Activated T-helper 1 cell treated with anti-CD3 and anti-CD28 coated beads, Interleukin-12 subunit alpha, Interleukin-12 subunit beta, Interleukin-2, Interleukin-4 antibody, amounts not matched to agents 30 ng/mL and 10 ng/mL and 1 ng/mL, durations not matched to agents 14 hours and 24 hours and 36 hours (primary cell): ENCODE measurements at regions of chr7 and their contacts with region 1.

Region 1: GRCh38 chr7:92621026-92621540 is 30.9 kb upstream of the FAM133B start:
- DNase-seq: peak; percentile 74
- H3K4me3 Mint-ChIP-seq: peak overlapping the region; percentile 75
- H3K27ac Mint-ChIP-seq: peak overlapping the region; percentile 89
- H3K4me1 Mint-ChIP-seq: peaks cover 58% of the 10 kb centered on the region
- H3K27me3 Mint-ChIP-seq: no peaks in the 10 kb centered on the region

Region 2: GRCh38 chr7:92633211-92633906 is 12.3 kb after region 1 on chr7:
- intact Hi-C with region 1: loop called (anchors 1 kb)
- DNase-seq: peak; percentile 48
- H3K4me3 Mint-ChIP-seq: peak overlapping the region; percentile 64
- H3K27ac Mint-ChIP-seq: peak overlapping the region; percentile 94
- H3K4me1 Mint-ChIP-seq: peaks cover 80% of the 10 kb centered on the region
- H3K27me3 Mint-ChIP-seq: no peaks in the 10 kb centered on the region

Region 3: DNA sequence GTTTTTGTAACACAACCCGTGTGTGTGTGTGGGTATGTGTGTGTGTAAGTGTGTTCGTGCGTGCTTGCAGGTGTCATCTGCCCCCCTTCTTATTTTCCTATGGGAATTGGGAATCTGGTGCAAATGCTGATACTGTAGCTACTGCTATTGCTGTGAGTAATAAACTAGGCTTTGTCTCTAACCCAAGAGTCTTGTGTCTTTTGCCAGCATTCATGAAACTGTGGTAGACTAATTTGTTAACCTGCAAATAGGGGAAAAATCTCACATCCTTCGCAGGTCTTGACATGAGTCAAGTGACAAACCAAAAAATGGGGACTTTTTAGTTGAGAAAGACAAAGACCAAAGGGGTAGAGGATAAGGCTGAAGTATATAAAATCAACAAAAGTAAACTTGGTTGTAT is 27.0 kb after region 1 on chr7:
- intact Hi-C with region 1: loop called (anchors 1 kb)
- DNase-seq: no peak
- H3K4me3 Mint-ChIP-seq: peak overlapping the region; percentile 57
- H3K27ac Mint-ChIP-seq: peak overlapping the region; percentile 98
- H3K4me1 Mint-ChIP-seq: peaks cover 91% of the 10 kb centered on the region
- H3K27me3 Mint-ChIP-seq: no peaks in the 10 kb centered on the region

Region 4: DNA sequence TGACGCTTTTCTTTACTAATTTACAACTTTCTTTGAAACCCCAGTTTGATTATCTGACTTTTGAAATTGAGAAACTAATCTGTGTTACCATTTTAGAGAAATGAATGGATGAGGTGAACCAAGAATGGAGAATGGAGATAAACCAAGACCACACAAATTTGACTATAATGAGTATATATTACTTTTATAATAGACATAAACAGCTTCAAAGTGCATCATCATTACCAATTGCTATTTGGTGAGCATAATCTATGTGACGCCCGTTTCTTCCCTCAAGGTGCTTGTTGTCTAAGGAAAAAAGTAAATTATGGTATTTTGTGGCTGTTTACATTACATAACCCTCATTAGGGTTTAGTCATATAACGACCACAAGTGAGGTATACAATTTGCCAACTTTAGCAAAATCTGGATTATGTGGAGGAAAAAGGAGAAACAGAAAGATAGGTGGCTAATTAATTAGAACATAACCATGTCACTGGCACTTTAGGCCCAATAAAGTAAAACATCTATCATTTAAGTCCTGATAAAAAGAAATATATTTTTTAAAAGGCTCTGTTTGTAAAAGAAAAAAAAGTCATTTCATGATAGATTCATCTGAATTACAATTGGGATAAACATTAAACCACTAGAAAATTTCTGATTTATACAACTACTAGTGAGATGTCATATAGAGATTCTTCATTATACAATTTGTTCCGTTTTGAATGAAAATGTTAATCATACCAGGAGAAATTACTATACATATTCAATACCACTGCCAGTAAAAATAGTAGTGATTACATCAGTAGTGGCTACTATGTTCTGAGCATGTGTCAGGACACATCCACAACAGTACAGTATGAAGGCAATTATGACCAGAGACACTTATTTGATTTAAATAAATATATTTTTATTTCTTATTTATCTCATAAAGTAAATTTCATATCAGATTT is 87.3 kb after region 1 on chr7:
- intact Hi-C with region 1: loop called (anchors 1 kb)
- DNase-seq: no peak
- H3K4me3 Mint-ChIP-seq: no peak overlapping the region
- H3K27ac Mint-ChIP-seq: peak overlapping the region; percentile 84
- H3K4me1 Mint-ChIP-seq: peaks cover 59% of the 10 kb centered on the region
- H3K27me3 Mint-ChIP-seq: no peaks in the 10 kb centered on the region

Region 5: DNA sequence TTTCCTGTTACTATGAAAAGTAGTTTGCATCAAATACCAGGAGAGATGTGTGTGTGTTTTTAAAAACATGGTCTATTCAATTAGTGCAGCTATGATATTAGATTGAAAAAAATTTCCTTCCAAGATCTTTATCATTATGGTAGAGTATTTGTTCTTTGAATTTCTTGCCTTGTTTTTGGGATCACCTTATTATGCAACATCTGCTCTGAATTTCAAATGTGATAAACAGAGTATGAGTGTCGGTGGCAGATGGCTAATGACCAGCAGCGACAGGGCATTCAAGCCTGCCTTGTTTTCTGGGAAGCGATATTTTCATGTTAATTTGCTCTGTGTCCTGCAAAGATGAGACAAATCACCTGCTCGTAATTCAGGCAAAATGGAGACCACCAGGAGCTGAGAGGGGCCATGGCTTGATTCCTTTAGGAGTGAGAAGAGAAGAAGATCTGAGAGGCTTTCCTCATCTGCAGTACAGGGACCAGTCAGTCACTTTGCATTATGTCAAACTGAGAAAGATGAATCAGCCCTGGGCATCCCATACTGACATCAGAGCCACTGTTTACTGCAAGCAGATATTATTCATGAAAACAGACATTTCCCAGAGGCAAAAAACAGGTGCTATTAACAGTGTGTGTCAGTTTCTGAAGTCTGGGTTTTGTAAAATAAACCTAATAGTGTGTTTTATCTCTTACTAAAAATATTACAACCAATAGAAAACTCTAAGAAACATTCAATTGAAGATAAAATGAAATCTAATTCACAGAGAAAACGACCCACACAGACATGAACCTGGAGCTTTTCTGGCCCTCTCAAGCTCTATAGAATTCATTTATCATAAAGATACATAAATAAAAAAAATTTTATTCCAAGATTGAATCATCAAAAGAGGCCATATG is 147.7 kb after region 1 on chr7:
- intact Hi-C with region 1: loop called (anchors 1 kb)
- DNase-seq: peak; percentile 20
- H3K4me3 Mint-ChIP-seq: peak overlapping the region; percentile 47
- H3K27ac Mint-ChIP-seq: peak overlapping the region; percentile 85
- H3K4me1 Mint-ChIP-seq: peaks cover 83% of the 10 kb centered on the region
- H3K27me3 Mint-ChIP-seq: no peaks in the 10 kb centered on the region

Region 6: GRCh38 chr7:92953657-92954056 is 332.6 kb after region 1 on chr7:
- intact Hi-C with region 1: loop called (anchors 2 kb)
- DNase-seq: no peak
- H3K4me3 Mint-ChIP-seq: no peak overlapping the region
- H3K27ac Mint-ChIP-seq: peak overlapping the region; percentile 40
- H3K4me1 Mint-ChIP-seq: peaks cover 34% of the 10 kb centered on the region
- H3K27me3 Mint-ChIP-seq: peaks cover 1% of the 10 kb centered on the region

Region 7: GRCh38 chr7:93055543-93056107 is 434.5 kb after region 1 on chr7:
- intact Hi-C with region 1: loop called (anchors 1 kb)
- DNase-seq: no peak
- H3K4me3 Mint-ChIP-seq: no peak overlapping the region
- H3K27ac Mint-ChIP-seq: no peak overlapping the region
- H3K4me1 Mint-ChIP-seq: peaks cover 19% of the 10 kb centered on the region
- H3K27me3 Mint-ChIP-seq: peaks cover 6% of the 10 kb centered on the region